ENCODE measurements at regions of chr1 and their contacts with region 1.

Region 1: GRCh38 chr1:207454046-207454964 is at the start of gene CR2:
- DNase-seq: peak; percentile 80
- ATAC-seq: peak; percentile 98
- H3K4me3 Mint-ChIP-seq: peak within 1 kb of the TSS; percentile 67
- H3K27ac Mint-ChIP-seq: no peak within 1 kb of the TSS
- H3K4me1 Mint-ChIP-seq: peaks cover 4% of the 10 kb centered on the region
- H3K27me3 Mint-ChIP-seq: peaks cover 27% of the 10 kb centered on the region
- CTCF ChIP-seq: no peak
- total RNA-seq, gene CR2: 3.8 to 7.6 TPM (median 6.5 TPM) in 3 replicates

Region 2: DNA sequence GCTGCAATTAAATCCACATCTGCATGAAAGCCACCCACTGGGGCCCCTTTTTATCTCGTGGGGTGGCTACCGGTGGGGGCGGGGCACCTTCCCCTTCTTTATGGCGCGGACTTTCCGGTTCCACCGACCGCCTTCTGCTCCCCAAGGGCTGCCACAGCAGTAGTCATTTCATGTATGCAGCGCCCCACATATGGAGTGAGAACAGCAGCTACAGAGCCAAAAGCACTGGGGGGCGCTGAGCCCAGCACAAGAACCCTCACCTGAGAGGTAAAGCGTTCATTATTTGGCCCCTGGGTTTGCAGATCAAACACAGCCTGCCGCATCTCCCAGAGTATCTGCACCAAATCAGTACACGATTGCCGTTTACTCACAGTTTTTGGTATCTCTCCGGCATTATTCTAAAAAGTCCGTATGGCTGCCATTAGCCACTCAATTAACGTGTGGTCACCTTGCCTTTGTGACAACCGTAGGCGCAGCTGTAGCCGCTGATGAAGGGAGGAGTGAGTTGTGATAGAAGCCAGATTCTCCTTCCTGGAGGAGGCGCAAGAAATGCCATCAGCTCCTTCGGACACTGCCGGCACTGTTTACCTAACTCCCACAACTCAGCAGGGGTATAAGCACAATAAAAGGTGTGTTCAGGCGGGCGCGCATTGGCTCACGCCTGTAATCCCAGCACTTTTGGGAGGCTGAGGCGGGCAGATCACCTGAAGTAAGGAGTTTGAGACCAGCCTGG is 30.6 kb before region 1 on chr1:
- CTCF ChIA-PET with region 1: interaction called, 19 read pairs
- POLR2A ChIA-PET with region 1: interaction called, 7 read pairs
- DNase-seq: peak; percentile 29
- ATAC-seq: peak; percentile 81
- H3K4me3 Mint-ChIP-seq: peak overlapping the region; percentile 63
- H3K27ac Mint-ChIP-seq: peak overlapping the region; percentile 34; the same call in 1 of the 2 replicates
- H3K4me1 Mint-ChIP-seq: peaks cover 13% of the 10 kb centered on the region
- H3K27me3 Mint-ChIP-seq: peaks cover 6% of the 10 kb centered on the region
- CTCF ChIP-seq: no peak

Region 3: GRCh38 chr1:207499573-207499972 is 45.3 kb after region 1 on chr1:
- CTCF ChIA-PET with region 1: interaction called, 12 read pairs
- POLR2A ChIA-PET with region 1: no interaction called
- DNase-seq: peak; percentile 64
- ATAC-seq: peak; percentile 69
- H3K4me3 Mint-ChIP-seq: no peak overlapping the region
- H3K27ac Mint-ChIP-seq: no peak overlapping the region
- H3K4me1 Mint-ChIP-seq: peaks cover 11% of the 10 kb centered on the region
- H3K27me3 Mint-ChIP-seq: peaks cover 29% of the 10 kb centered on the region
- CTCF ChIP-seq: peak; percentile 60

Region 4: DNA sequence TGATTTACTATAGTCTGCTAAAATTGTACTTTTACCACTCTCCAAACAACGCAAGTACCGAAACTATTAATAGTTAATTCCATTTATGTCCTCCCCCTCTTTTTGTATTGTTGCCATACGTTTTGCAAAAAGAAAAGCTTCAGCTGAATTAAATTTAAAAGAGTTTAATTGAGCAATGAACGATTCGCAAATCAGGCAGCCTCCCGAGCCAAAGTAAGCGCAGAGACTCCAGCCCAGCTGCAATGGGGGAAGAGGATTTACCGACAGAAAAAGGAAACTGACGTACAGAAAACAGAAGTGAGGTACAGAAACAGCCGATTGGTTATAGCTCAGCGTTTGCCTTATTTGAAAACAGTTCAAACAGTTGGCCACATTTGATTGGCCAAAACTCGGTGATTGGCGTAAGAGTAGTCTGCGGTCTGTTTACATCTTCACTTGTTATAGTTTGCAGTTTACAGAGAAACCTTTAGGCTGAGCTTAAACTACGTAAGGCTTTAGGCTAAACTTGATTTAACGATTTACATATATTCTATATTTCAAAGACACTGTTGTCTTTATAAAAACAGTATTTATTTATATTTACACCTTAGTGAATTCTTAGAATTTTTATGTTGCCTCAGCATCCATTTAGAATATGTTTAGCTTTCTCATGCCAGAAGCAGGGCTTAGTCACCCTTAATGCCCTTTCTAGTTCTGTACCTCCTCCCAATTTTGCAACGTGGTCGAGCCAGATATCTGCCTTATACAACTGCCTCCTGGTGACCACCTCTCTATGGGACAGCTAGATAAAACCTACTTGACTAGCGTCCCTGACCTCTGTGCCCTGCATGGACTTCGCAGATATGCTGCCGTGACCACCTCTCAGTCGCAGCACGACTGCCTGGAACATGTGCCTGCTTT is 65.5 kb after region 1 on chr1:
- CTCF ChIA-PET with region 1: interaction called, 10 read pairs
- POLR2A ChIA-PET with region 1: no interaction called
- DNase-seq: no peak
- ATAC-seq: no peak; the same call in 1 of the 2 replicates
- H3K4me3 Mint-ChIP-seq: no peak overlapping the region
- H3K27ac Mint-ChIP-seq: no peak overlapping the region
- H3K4me1 Mint-ChIP-seq: 0 out of 2 replicates have a peak, but pooled peaks cover 6% of the 10 kb centered on the region
- H3K27me3 Mint-ChIP-seq: no peaks in the 10 kb centered on the region
- CTCF ChIP-seq: no peak

Region 5: GRCh38 chr1:207659545-207660183 is 205.4 kb after region 1 on chr1:
- CTCF ChIA-PET with region 1: no interaction called
- POLR2A ChIA-PET with region 1: no interaction called
- DNase-seq: no peak
- ATAC-seq: no peak
- H3K4me3 Mint-ChIP-seq: no peak overlapping the region
- H3K27ac Mint-ChIP-seq: no peak overlapping the region
- H3K4me1 Mint-ChIP-seq: peaks cover 3% of the 10 kb centered on the region
- H3K27me3 Mint-ChIP-seq: peaks cover 6% of the 10 kb centered on the region; the same call in 1 of the 2 replicates
- CTCF ChIP-seq: no peak

Region 6: GRCh38 chr1:208118841-208119606 is 664.7 kb after region 1 on chr1:
- CTCF ChIA-PET with region 1: no interaction called
- POLR2A ChIA-PET with region 1: no interaction called
- DNase-seq: no peak
- ATAC-seq: no peak
- H3K4me3 Mint-ChIP-seq: no peak overlapping the region
- H3K27ac Mint-ChIP-seq: no peak overlapping the region
- H3K4me1 Mint-ChIP-seq: peaks cover 7% of the 10 kb centered on the region
- H3K27me3 Mint-ChIP-seq: no peaks in the 10 kb centered on the region
- CTCF ChIP-seq: no peak

Measured in WTC11 (cell line).